Stomach (tissue), 19 donors: ENCODE measurements at regions of chr4 and their contacts with region 1.

Region 1: DNA sequence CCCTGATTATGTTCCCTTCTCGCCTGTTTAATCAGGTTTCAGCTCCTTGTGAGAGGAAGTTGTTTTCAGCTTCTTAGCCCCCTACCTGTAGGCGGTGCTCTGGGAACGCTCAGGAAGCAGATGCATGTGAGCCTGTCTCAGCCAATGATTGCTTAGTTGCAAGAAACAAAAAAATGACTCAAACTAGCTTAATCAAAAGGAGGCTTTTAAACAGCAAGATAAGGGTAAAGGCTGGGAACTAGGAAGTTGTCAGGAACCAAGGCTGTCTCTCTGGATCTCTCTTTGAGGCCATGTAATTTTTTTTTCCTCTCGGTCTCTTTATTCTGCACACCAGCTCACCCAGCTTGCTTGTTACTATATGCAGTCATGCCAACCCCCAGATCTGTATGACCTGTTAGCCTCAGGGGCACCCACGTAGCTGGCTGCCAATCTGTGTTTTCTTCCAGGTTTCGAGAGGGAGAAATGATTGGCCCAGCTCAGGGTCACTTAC is 109.1 kb downstream of the PTTG2 start:
- DNase-seq: peak; percentile 67 to 94
- H3K4me3 ChIP-seq: no peak overlapping the region
- H3K27ac ChIP-seq: peak overlapping the region; percentile 54 to 79 (median 66)
- H3K4me1 ChIP-seq: peaks cover 7 to 48% (median 31%) of the 10 kb centered on the region in 4 donors
- H3K27me3 ChIP-seq: no peaks in the 10 kb centered on the region
- CTCF ChIP-seq: peak in 5 of 7 experiments; percentile 22 to 80 (median 61)
- EP300 ChIP-seq: no peak
- POLR2A ChIP-seq: no peak

Region 2: DNA sequence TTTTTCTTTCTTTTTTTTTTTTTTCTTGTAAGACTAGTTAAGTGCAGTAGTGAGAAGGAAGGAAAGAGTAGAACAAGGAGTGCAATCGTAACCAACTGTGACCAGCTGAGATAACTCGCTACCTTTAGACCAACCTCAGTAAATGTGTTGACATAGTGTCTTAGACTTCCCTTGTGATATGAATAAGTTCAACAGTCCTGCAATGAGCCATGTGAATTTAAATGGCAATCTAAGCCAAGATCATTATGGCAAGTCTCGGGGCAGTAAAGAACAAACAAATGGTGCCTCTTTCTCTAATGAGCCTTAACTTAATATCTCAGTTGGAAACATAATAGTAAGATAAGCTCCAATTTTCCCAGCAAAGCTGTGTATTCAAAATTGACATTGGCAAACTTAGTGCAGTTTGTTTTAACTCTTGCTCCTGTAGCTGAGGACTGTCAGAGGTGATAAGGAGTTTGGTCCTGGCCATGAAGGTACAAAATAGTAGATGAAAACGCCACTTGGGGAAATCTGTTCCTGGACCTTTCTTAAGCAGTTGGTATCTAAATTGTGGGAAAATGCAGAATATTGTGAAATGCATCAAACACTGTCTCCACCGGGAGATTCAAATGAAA is 369.3 kb before region 1 on chr4:
- intact Hi-C with region 1: no loop called
- DNase-seq: peak in 1 of 2 donors; percentile 73
- H3K4me3 ChIP-seq: no peak overlapping the region
- H3K27ac ChIP-seq: peak overlapping the region; percentile 30 to 75 (median 62)
- H3K4me1 ChIP-seq: peaks cover 5 to 23% (median 10%) of the 10 kb centered on the region in 4 donors
- H3K27me3 ChIP-seq: no peaks in the 10 kb centered on the region
- CTCF ChIP-seq: no peak
- EP300 ChIP-seq: no peak
- POLR2A ChIP-seq: no peak

Region 3: GRCh38 chr4:37826295-37827029 is 242.9 kb before region 1 on chr4 and contains the start of gene PGM2:
- intact Hi-C with region 1: no loop called
- DNase-seq: peak; percentile 89 to 97
- H3K4me3 ChIP-seq: peak within 1 kb of the TSS; percentile 74 to 95 (median 88)
- H3K27ac ChIP-seq: peak within 1 kb of the TSS; percentile 83 to 90 (median 88)
- H3K4me1 ChIP-seq: peaks cover 8 to 36% (median 23%) of the 10 kb centered on the region in 4 donors
- H3K27me3 ChIP-seq: no peaks in the 10 kb centered on the region
- CTCF ChIP-seq: no peak
- EP300 ChIP-seq: no peak
- POLR2A ChIP-seq: peak in 1 of 4 donors; percentile 75
- total RNA-seq, gene PGM2: 8.7 to 53.1 (median 14.0) TPM

Region 4: DNA sequence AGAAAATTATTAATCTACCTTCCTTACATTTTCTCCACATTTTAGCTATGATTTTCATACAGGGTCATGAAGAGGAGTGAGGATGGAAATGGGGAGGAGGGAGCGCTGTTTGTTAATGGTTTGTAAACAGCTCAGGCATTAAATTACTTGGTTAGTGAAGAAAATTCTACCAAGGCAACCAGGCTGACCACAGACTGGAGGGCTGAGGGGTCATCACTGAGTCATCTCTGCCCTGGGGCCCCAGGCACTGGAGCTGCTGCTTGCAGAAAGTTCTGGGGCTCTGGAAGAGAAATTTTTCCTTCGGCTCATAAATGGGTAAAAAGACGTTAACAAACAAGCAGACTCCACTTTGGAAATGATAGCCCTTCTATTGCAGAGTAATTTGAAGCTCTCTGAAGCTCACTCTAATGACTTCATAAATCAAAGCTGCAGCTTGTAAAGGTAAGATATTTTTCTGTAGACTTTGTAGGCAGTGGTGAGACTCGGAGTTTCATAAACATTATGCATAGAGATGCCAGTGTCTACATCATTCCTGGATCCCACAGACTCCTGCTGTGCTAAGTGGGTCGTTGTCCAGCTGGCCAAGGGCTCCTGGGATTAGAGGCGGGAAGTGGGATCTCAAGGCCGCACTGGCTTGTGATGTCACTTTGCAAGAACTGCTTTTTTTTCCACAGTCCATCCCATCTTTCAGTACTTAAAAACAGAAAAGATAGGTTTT is 50.5 kb after region 1 on chr4:
- intact Hi-C with region 1: no loop called
- DNase-seq: peak in 1 of 2 donors; percentile 69
- H3K4me3 ChIP-seq: no peak overlapping the region
- H3K27ac ChIP-seq: peak overlapping the region in 3 of 5 donors; percentile 31 to 55 (median 37)
- H3K4me1 ChIP-seq: peaks cover 0 to 38% (median 14%) of the 10 kb centered on the region in 4 donors
- H3K27me3 ChIP-seq: no peaks in the 10 kb centered on the region
- CTCF ChIP-seq: no peak
- EP300 ChIP-seq: no peak
- POLR2A ChIP-seq: no peak

Region 5: GRCh38 chr4:38730830-38731646 is 661.7 kb after region 1 on chr4:
- intact Hi-C with region 1: loop called (anchors 5 kb)
- DNase-seq: peak; percentile 88
- H3K4me3 ChIP-seq: no peak overlapping the region
- H3K27ac ChIP-seq: no peak overlapping the region
- H3K4me1 ChIP-seq: peaks cover 0 to 23% (median 21%) of the 10 kb centered on the region in 4 donors
- H3K27me3 ChIP-seq: no peaks in the 10 kb centered on the region
- CTCF ChIP-seq: peak in 6 of 7 experiments; percentile 83 to 98 (median 93)
- EP300 ChIP-seq: no peak
- POLR2A ChIP-seq: no peak